A673 (cell line): ENCODE measurements at regions of chr1 and their contacts with region 1.

Region 1: DNA sequence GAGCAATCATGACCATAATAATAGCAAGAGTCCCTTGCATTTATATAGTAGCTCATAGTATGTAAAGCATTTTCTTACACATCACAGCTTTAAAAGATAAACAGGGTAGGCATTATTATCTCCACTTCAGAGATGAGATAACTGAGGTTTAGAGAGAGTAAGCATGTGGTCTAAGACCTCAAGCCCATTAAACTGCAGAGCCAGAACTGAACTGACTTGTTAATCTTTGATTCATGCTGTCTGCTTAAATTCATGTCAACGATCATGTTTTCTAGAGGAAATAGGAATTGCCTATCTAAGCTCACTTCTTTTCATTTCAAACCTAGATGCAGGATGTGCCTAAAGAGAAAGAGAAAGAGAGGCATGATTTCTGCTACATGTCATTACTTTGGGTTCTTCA is 524.8 kb downstream of the PTPRC start:
- DNase-seq: no peak
- H3K4me3 ChIP-seq: no peak overlapping the region
- H3K27ac ChIP-seq: peak overlapping the region; percentile 100
- H3K4me1 ChIP-seq: peaks cover 54% of the 10 kb centered on the region
- H3K27me3 ChIP-seq: no peaks in the 10 kb centered on the region
- CTCF ChIP-seq: no peak

Region 2: GRCh38 chr1:198771563-198772153 is 392.0 kb before region 1 on chr1:
- CTCF ChIA-PET with region 1: no interaction called
- POLR2A ChIA-PET with region 1: no interaction called
- intact Hi-C with region 1: loop called (anchors 1 kb)
- DNase-seq: peak; percentile 91
- H3K4me3 ChIP-seq: no peak overlapping the region
- H3K27ac ChIP-seq: peak overlapping the region; percentile 78
- H3K4me1 ChIP-seq: peaks cover 39% of the 10 kb centered on the region
- H3K27me3 ChIP-seq: no peaks in the 10 kb centered on the region
- CTCF ChIP-seq: peak; percentile 78

Region 3: GRCh38 chr1:198937231-198938031 is 226.2 kb before region 1 on chr1:
- CTCF ChIA-PET with region 1: no interaction called
- POLR2A ChIA-PET with region 1: no interaction called
- intact Hi-C with region 1: loop called (anchors 1 kb)
- DNase-seq: peak; percentile 98
- H3K4me3 ChIP-seq: peak overlapping the region; percentile 68
- H3K27ac ChIP-seq: peak overlapping the region; percentile 94
- H3K4me1 ChIP-seq: peaks cover 10% of the 10 kb centered on the region
- H3K27me3 ChIP-seq: no peaks in the 10 kb centered on the region
- CTCF ChIP-seq: no peak

Region 4: DNA sequence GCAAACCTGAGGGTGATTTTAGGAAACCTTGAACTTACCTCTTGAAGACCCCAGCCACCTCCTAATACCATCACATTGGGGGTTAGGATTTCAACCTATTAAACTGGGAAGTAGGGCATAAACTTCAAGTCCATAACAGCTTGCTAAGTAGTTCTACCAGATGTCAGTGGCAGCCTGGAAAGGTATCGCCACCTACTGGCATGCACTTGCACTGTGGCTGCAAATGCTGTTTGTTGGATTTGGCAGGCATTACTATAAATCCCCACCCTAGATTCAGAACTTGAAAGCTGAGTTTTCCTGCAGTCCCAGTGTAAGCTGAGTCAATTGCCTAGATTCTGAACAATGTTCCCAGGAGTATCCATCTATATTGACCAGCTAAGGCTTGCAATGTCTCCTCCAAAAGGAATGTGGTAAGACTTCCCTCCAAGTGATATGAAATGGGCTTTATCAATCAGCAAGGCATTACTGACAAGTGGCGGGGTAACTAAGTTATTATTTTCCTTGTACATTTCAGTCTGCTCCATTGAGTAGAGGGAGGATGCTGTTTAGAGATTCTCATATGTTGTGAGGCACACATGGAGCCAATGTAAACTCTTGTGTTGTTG is 50.3 kb before region 1 on chr1:
- CTCF ChIA-PET with region 1: no interaction called
- POLR2A ChIA-PET with region 1: no interaction called
- intact Hi-C with region 1: no loop called
- DNase-seq: peak; percentile 85
- H3K4me3 ChIP-seq: no peak overlapping the region
- H3K27ac ChIP-seq: peak overlapping the region; percentile 34
- H3K4me1 ChIP-seq: no peaks in the 10 kb centered on the region
- H3K27me3 ChIP-seq: no peaks in the 10 kb centered on the region
- CTCF ChIP-seq: peak; percentile 91

Region 5: GRCh38 chr1:199243423-199244061 is 79.9 kb after region 1 on chr1:
- CTCF ChIA-PET with region 1: no interaction called
- POLR2A ChIA-PET with region 1: no interaction called
- intact Hi-C with region 1: loop called (anchors 1 kb)
- DNase-seq: peak; percentile 74
- H3K4me3 ChIP-seq: no peak overlapping the region
- H3K27ac ChIP-seq: peak overlapping the region; percentile 47
- H3K4me1 ChIP-seq: peaks cover 3% of the 10 kb centered on the region
- H3K27me3 ChIP-seq: no peaks in the 10 kb centered on the region
- CTCF ChIP-seq: peak; percentile 73

Region 6: DNA sequence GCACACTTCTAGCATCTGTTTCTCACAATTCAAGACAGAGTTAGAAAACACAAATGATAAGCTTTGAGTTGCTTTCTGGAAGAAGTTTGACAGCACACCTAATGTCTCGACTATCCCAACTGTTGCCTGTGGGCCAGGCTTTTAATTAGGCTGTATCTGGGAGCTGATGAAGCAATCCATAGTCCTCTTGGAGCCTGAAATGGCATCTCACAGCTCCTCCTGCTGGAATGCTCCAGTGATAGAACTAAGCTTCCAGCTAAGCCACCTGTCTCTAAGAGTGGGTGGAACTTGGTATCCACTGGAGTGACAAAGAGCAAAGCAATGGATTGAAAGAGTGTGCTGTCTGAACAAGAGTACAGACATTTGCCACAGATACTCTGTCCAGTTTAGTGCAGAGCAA is 258.5 kb after region 1 on chr1:
- CTCF ChIA-PET with region 1: interaction called, 3 read pairs
- POLR2A ChIA-PET with region 1: no interaction called
- intact Hi-C with region 1: loop called (anchors 1 kb)
- DNase-seq: peak; percentile 76
- H3K4me3 ChIP-seq: no peak overlapping the region
- H3K27ac ChIP-seq: peak overlapping the region; percentile 34
- H3K4me1 ChIP-seq: peaks cover 3% of the 10 kb centered on the region
- H3K27me3 ChIP-seq: no peaks in the 10 kb centered on the region
- CTCF ChIP-seq: peak; percentile 70

Region 7: GRCh38 chr1:199684686-199685273 is 521.1 kb after region 1 on chr1:
- CTCF ChIA-PET with region 1: no interaction called
- POLR2A ChIA-PET with region 1: no interaction called
- intact Hi-C with region 1: loop called (anchors 1 kb)
- DNase-seq: peak; percentile 84
- H3K4me3 ChIP-seq: no peak overlapping the region
- H3K27ac ChIP-seq: no peak overlapping the region
- H3K4me1 ChIP-seq: peaks cover 89% of the 10 kb centered on the region
- H3K27me3 ChIP-seq: no peaks in the 10 kb centered on the region
- CTCF ChIP-seq: peak; percentile 90